ENCODE measurements at regions of chr1 and their contacts with region 1.

Region 1: GRCh38 chr1:118918230-118918939 is 69.8 kb downstream of the TBX15 start:
- DNase-seq: no peak
- H3K4me3 ChIP-seq: no peak overlapping the region
- H3K27ac ChIP-seq: no peak overlapping the region
- H3K4me1 ChIP-seq: no peaks in the 10 kb centered on the region
- H3K27me3 ChIP-seq: peaks cover 2% of the 10 kb centered on the region
- CTCF ChIP-seq: no peak

Region 2: GRCh38 chr1:118878661-118879060 is 39.7 kb before region 1 on chr1:
- CTCF ChIA-PET with region 1: no interaction called
- dilution Hi-C with region 1: loop called (anchors 5 kb)
- in situ Hi-C with region 1: no loop called
- intact Hi-C with region 1: no loop called
- DNase-seq: no peak
- H3K4me3 ChIP-seq: no peak overlapping the region
- H3K27ac ChIP-seq: no peak overlapping the region
- H3K4me1 ChIP-seq: no peaks in the 10 kb centered on the region
- H3K27me3 ChIP-seq: no peaks in the 10 kb centered on the region
- CTCF ChIP-seq: no peak

Region 3: GRCh38 chr1:118933051-118933781 is 14.8 kb after region 1 on chr1:
- CTCF ChIA-PET with region 1: interaction called, 26 read pairs
- dilution Hi-C with region 1: no loop called
- in situ Hi-C with region 1: no loop called
- intact Hi-C with region 1: no loop called
- DNase-seq: no peak
- H3K4me3 ChIP-seq: no peak overlapping the region
- H3K27ac ChIP-seq: no peak overlapping the region
- H3K4me1 ChIP-seq: no peaks in the 10 kb centered on the region
- H3K27me3 ChIP-seq: peaks cover 3% of the 10 kb centered on the region
- CTCF ChIP-seq: no peak

Region 4: GRCh38 chr1:119275145-119276134 is 357.1 kb after region 1 on chr1:
- CTCF ChIA-PET with region 1: no interaction called
- dilution Hi-C with region 1: no loop called
- in situ Hi-C with region 1: no loop called
- intact Hi-C with region 1: no loop called
- DNase-seq: peak; percentile 53
- H3K4me3 ChIP-seq: no peak overlapping the region
- H3K27ac ChIP-seq: no peak overlapping the region
- H3K4me1 ChIP-seq: peaks cover 21% of the 10 kb centered on the region
- H3K27me3 ChIP-seq: no peaks in the 10 kb centered on the region
- CTCF ChIP-seq: peak; percentile 93 to 98

Region 5: GRCh38 chr1:119409731-119410130 is 491.3 kb after region 1 on chr1:
- CTCF ChIA-PET with region 1: no interaction called
- dilution Hi-C with region 1: no loop called
- in situ Hi-C with region 1: no loop called
- intact Hi-C with region 1: no loop called
- DNase-seq: peak; percentile 9
- H3K4me3 ChIP-seq: no peak overlapping the region
- H3K27ac ChIP-seq: no peak overlapping the region
- H3K4me1 ChIP-seq: no peaks in the 10 kb centered on the region
- H3K27me3 ChIP-seq: peaks cover 5% of the 10 kb centered on the region
- CTCF ChIP-seq: no peak

Measured in mammary epithelial cell (primary cell).